Activated T-helper 1 cell treated with anti-CD3 and anti-CD28 coated beads, Interleukin-12 subunit alpha, Interleukin-12 subunit beta, Interleukin-2, Interleukin-4 antibody, amounts not matched to agents 30 ng/mL and 10 ng/mL and 1 ng/mL, durations not matched to agents 14 hours and 24 hours and 36 hours (primary cell): ENCODE measurements at regions of chr1 and their contacts with region 1.

Region 1: GRCh38 chr1:205658943-205659581 is 21.2 kb downstream of the SLC45A3 start:
- DNase-seq: peak; percentile 66
- H3K4me3 Mint-ChIP-seq: no peak overlapping the region
- H3K27ac Mint-ChIP-seq: no peak overlapping the region
- H3K4me1 Mint-ChIP-seq: no peaks in the 10 kb centered on the region
- H3K27me3 Mint-ChIP-seq: peaks cover 15% of the 10 kb centered on the region

Region 2: DNA sequence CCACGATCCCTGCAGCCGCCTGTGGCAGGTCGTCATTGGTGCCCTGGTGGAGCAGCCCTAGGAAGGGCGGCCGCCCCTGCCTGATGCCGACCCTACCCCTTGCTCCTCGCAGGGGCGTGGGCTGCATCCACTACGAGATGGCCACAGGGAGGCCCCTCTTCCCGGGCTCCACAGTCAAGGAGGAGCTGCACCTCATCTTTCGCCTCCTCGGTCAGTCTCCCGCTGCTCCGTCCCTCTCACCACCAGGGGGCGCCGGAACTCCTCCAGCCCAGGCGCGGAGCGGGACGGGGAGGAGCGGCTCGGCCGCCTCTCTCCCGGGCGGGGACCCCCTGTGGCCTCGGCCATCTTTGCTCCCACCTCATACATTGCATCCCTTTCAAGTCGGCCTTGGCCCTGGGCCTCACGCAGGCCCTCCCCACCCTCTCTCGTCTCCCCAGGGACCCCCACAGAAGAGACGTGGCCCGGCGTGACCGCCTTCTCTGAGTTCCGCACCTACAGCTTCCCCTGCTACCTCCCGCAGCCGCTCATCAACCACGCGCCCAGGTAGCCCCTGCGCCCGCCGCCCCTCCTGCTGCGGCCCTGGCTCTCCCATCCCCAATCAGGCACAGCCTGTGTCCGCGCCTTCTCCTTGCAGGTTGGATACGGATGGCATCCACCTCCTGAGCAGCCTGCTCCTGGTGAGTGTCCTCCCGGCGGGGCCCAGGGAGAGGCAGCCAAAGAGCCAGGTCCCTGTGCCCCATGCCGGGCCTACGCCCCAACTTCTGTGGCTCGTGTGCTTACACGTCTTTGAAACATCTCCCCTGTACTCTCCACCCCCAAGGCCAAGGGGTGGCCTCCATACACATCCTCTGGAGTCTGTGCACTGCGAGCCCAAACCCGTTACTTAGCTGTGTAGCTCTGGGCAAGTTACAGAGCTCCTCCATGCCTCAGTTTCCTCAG is 129.9 kb before region 1 on chr1:
- intact Hi-C with region 1: loop called (anchors 1 kb)
- DNase-seq: peak; percentile 68
- H3K4me3 Mint-ChIP-seq: no peak overlapping the region
- H3K27ac Mint-ChIP-seq: no peak overlapping the region
- H3K4me1 Mint-ChIP-seq: no peaks in the 10 kb centered on the region
- H3K27me3 Mint-ChIP-seq: no peaks in the 10 kb centered on the region

Region 3: GRCh38 chr1:205711104-205712020 is 52.3 kb after region 1 on chr1:
- intact Hi-C with region 1: loop called (anchors 1 kb)
- DNase-seq: peak; percentile 42
- H3K4me3 Mint-ChIP-seq: no peak overlapping the region
- H3K27ac Mint-ChIP-seq: peak overlapping the region; percentile 56
- H3K4me1 Mint-ChIP-seq: peaks cover 16% of the 10 kb centered on the region
- H3K27me3 Mint-ChIP-seq: no peaks in the 10 kb centered on the region

Region 4: DNA sequence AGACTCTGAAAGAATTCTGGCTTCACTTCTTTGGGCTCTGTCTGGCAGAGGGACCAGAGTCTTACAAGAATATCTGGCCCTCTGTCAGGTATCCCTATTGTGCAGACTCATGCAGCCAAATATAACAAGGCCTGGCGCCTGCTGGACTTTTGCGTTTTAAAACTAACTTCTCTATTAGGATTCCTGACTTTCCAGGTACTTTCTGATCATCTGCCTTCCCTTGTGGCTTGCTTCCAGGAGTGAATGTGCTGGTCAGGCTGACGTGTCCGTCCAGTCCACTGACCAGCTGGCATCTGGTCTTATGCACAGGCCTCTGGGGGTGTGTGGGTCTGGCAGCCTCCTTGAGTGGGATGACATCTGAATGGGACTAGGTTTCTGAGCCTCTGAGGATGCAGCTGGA is 124.8 kb after region 1 on chr1:
- intact Hi-C with region 1: loop called (anchors 2 kb)
- DNase-seq: no peak
- H3K4me3 Mint-ChIP-seq: no peak overlapping the region
- H3K27ac Mint-ChIP-seq: no peak overlapping the region
- H3K4me1 Mint-ChIP-seq: peaks cover 22% of the 10 kb centered on the region
- H3K27me3 Mint-ChIP-seq: no peaks in the 10 kb centered on the region

Region 5: DNA sequence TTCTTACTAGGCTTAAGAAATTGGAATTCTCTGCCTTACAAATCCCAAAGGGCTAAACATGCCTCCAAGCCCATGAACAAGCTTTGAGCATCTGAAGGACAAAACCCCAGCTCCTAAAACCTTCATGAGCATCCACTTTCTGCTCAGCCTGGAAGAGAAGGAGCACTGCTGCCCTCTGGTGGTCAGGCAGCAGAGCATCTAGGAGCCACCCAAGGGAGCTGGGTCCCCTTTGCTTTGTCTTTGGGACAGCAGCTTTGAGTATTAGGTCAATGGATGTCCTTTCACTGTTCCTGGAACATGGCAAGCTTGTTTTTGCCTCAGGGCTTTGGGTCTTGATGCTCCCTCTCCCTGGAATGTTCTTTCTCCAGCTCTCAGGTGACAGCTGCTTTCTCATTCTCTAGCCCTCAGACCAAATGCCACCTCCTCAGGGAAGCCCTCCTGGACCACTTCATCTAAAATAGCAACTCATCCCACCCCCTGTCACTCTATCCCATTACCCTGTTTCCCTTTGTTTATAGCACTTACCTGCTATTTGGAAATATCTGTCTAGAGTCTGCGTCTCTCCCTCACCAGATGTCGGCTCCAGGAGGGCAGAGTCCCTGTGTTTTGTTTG is 318.4 kb after region 1 on chr1:
- intact Hi-C with region 1: loop called (anchors 1 kb)
- DNase-seq: peak; percentile 63
- H3K4me3 Mint-ChIP-seq: no peak overlapping the region
- H3K27ac Mint-ChIP-seq: no peak overlapping the region
- H3K4me1 Mint-ChIP-seq: no peaks in the 10 kb centered on the region
- H3K27me3 Mint-ChIP-seq: no peaks in the 10 kb centered on the region